IMR-90 (cell line): ENCODE measurements at regions of chr12 and their contacts with region 1.

Region 1: GRCh38 chr12:105820429-105821140 is 318.2 kb downstream of the NUAK1 start:
- DNase-seq: peak; percentile 22
- ATAC-seq: no peak
- H3K4me3 ChIP-seq: no peak overlapping the region
- H3K27ac ChIP-seq: no peak overlapping the region
- H3K4me1 ChIP-seq: peaks cover 5% of the 10 kb centered on the region; the same call in 1 of the 2 replicates
- H3K27me3 ChIP-seq: peaks cover 6% of the 10 kb centered on the region
- CTCF ChIP-seq: no peak
- POLR2A ChIP-seq: no peak
- RAD21 ChIP-seq: no peak

Region 2: GRCh38 chr12:105574056-105574702 is 246.4 kb before region 1 on chr12:
- CTCF ChIA-PET with region 1: no interaction called
- POLR2A ChIA-PET with region 1: no interaction called
- dilution Hi-C with region 1: no loop called
- in situ Hi-C with region 1: no loop called
- intact Hi-C with region 1: no loop called
- DNase-seq: no peak
- ATAC-seq: no peak
- H3K4me3 ChIP-seq: no peak overlapping the region
- H3K27ac ChIP-seq: no peak overlapping the region
- H3K4me1 ChIP-seq: no peaks in the 10 kb centered on the region
- H3K27me3 ChIP-seq: peaks cover 5% of the 10 kb centered on the region; the same call in 1 of the 2 replicates
- CTCF ChIP-seq: no peak
- POLR2A ChIP-seq: no peak
- RAD21 ChIP-seq: no peak

Region 3: DNA sequence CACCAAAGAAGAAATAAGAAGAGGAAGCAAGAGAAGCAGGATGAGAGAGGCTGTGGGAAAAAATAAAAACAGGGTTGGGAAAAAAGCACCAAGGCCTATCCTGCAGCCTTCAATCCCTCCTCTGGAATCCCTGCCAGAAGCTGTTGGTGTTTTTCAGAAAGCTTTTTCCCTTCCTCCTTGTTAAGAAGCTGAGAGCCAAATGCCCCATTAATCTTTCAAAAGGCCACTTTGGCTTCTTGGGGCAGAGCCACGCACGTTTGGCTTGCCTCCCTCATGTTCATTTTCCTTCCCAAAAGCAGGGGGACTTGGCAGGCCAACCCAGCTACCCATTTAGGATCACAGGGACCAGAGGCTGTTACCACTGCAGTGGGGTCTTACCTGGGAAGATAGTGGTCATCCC is 47.1 kb before region 1 on chr12:
- CTCF ChIA-PET with region 1: no interaction called
- POLR2A ChIA-PET with region 1: no interaction called
- dilution Hi-C with region 1: no loop called
- in situ Hi-C with region 1: no loop called
- intact Hi-C with region 1: no loop called
- DNase-seq: no peak
- ATAC-seq: no peak
- H3K4me3 ChIP-seq: no peak overlapping the region
- H3K27ac ChIP-seq: no peak overlapping the region
- H3K4me1 ChIP-seq: no peaks in the 10 kb centered on the region
- H3K27me3 ChIP-seq: peaks cover 5% of the 10 kb centered on the region
- CTCF ChIP-seq: no peak
- POLR2A ChIP-seq: no peak
- RAD21 ChIP-seq: no peak

Region 4: DNA sequence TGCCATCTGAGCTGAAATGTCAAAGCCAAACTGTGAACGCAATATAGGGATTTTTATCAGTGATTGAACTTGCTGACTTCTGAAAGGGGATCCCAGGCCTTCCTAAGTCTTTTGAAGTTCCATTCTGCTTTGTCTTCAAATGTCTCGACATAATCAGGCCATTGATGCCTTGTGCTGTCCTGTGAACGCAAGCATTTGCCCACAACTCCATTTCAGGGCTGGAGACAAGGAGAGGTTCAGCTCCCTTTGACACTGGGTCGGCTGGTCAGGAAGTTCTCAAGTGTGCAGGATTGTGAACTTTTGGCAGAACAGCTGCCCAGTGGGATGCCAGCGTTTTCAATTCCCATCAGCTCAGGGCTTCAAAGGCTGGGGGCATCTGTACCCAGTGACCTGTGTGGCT is 27.2 kb before region 1 on chr12:
- CTCF ChIA-PET with region 1: interaction called, 3 read pairs
- POLR2A ChIA-PET with region 1: no interaction called
- dilution Hi-C with region 1: no loop called
- in situ Hi-C with region 1: no loop called
- intact Hi-C with region 1: loop called (anchors 2 kb)
- DNase-seq: no peak
- ATAC-seq: no peak
- H3K4me3 ChIP-seq: no peak overlapping the region
- H3K27ac ChIP-seq: no peak overlapping the region
- H3K4me1 ChIP-seq: no peaks in the 10 kb centered on the region
- H3K27me3 ChIP-seq: peaks cover 1% of the 10 kb centered on the region; the same call in 1 of the 2 replicates
- CTCF ChIP-seq: no peak
- POLR2A ChIP-seq: no peak
- RAD21 ChIP-seq: no peak